Right lobe of liver (tissue), 6 donors: ENCODE measurements at regions of chr14 and their contacts with region 1.

Region 1: GRCh38 chr14:105682940-105683570 is 156.7 kb downstream of the TMEM121 start:
- DNase-seq: no peak
- ATAC-seq: no peak
- H3K4me3 ChIP-seq: no peak overlapping the region
- H3K27ac ChIP-seq: no peak overlapping the region
- H3K4me1 ChIP-seq: no peaks in the 10 kb centered on the region
- H3K27me3 ChIP-seq: no peaks in the 10 kb centered on the region
- CTCF ChIP-seq: no peak
- POLR2A ChIP-seq: no peak

Region 2: DNA sequence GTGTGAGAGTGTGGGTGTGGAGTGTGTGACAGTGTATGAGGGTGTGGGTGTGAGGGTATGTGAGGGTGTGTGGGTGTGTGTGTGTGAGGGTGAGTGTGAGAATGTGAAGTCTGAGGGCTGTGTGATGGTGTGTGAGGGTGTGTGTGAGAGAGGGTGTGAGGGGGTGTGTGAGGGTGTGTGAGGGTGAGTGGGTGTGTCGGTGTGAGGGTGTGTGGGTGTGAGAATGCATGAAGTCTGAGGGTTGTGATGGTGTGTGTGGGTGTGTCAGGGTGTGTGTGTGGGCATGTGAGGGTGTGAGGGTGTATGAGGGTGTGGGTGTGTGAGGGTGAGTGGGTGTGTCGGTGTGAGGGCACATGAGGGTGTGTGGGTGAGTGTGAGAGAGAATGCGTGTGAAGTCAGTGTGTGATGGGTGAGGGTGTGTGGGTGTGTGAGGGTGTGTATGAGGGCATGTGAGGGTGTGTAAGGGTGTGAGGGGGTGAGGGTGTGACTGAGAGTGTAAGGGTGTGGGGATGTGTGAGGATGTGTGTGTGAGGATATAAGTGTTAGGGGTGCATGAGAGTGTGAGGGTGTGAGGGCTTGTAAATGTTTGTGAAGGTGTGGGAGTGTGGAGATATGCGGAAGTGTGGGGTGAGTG is 120.2 kb before region 1 on chr14:
- intact Hi-C with region 1: loop called in 1 of 2 experiments (anchors 10 kb)
- DNase-seq: no peak
- ATAC-seq: no peak
- H3K4me3 ChIP-seq: no peak overlapping the region
- H3K27ac ChIP-seq: no peak overlapping the region
- H3K4me1 ChIP-seq: no peaks in the 10 kb centered on the region
- H3K27me3 ChIP-seq: no peaks in the 10 kb centered on the region
- CTCF ChIP-seq: no peak
- POLR2A ChIP-seq: no peak

Region 3: GRCh38 chr14:105617201-105617777 is 65.8 kb before region 1 on chr14:
- intact Hi-C with region 1: no loop called
- DNase-seq: no peak
- ATAC-seq: peak in 2 of 4 donors; percentile 37 to 40
- H3K4me3 ChIP-seq: no peak overlapping the region
- H3K27ac ChIP-seq: no peak overlapping the region
- H3K4me1 ChIP-seq: no peaks in the 10 kb centered on the region
- H3K27me3 ChIP-seq: no peaks in the 10 kb centered on the region
- CTCF ChIP-seq: no peak
- POLR2A ChIP-seq: no peak

Region 4: GRCh38 chr14:105944632-105945610 is 261.9 kb after region 1 on chr14:
- intact Hi-C with region 1: loop called in 1 of 2 experiments (anchors 10 kb)
- DNase-seq: peak; percentile 77 to 82 (median 78)
- ATAC-seq: peak; percentile 92 to 97 (median 96)
- H3K4me3 ChIP-seq: no peak overlapping the region
- H3K27ac ChIP-seq: no peak overlapping the region
- H3K4me1 ChIP-seq: peaks cover 0 to 5% (median 0%) of the 10 kb centered on the region in 4 donors
- H3K27me3 ChIP-seq: no peaks in the 10 kb centered on the region
- CTCF ChIP-seq: peak; percentile 80 to 89 (median 87)
- POLR2A ChIP-seq: no peak